Activated naive CD4-positive, alpha-beta T cell treated with anti-CD3 and anti-CD28 coated beads for 36 hours (primary cell): ENCODE measurements at regions of chr2 and their contacts with region 1.

Region 1: GRCh38 chr2:10408649-10409579 is 39.2 kb downstream of the ODC1 start:
- DNase-seq: peak; percentile 89
- H3K4me3 Mint-ChIP-seq: peak overlapping the region; percentile 59
- H3K27ac Mint-ChIP-seq: peak overlapping the region; percentile 97
- H3K4me1 Mint-ChIP-seq: peaks cover 46% of the 10 kb centered on the region
- H3K27me3 Mint-ChIP-seq: no peaks in the 10 kb centered on the region

Region 2: DNA sequence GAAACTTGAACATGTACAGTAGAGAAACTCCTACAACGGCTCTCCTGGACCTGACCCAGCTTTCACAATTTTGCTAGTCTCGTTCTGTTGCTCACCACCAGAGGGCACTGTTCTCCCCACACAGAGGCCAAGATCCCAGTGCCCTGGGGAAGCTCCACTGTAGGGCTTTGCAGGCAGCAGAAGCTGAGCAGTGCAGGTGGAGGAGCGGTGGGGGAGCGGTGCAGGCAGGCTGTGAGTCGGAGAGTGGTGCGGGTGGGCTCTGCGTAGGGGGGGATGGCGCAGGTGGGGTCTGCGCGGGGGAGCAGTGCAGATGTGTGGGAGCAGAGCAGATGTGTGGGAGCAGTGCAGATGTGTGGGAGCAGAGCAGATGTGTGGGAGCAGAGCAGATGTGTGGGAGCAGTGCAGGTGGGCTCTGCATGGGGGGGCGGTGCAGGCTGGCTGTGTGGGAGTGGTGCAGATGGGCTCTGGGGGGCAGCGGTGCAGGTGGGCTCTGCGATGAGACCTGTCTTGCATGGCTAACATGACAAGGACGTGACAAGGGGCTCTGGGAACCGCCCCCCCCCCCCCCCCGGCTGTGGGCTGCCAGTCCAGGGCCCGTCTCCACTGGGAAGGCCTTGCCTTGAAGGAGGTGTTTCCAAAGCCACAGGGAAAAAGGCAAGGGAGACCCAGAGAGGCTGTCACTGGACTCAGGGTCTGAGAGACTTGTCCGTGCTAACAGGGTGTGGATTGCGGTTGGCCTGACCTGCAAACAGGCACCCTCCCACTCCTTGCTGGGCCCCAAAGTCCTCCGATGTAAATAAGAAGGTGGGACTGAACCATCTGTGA is 336.0 kb before region 1 on chr2:
- CTCF ChIA-PET with region 1: interaction called, 26 read pairs
- intact Hi-C with region 1: loop called (anchors 1 kb)
- DNase-seq: peak; percentile 88
- H3K4me3 Mint-ChIP-seq: no peak overlapping the region
- H3K27ac Mint-ChIP-seq: no peak overlapping the region
- H3K4me1 Mint-ChIP-seq: peaks cover 1% of the 10 kb centered on the region
- H3K27me3 Mint-ChIP-seq: peaks cover 45% of the 10 kb centered on the region

Region 3: GRCh38 chr2:10232096-10232815 is 176.7 kb before region 1 on chr2:
- CTCF ChIA-PET with region 1: interaction called, 15 read pairs
- intact Hi-C with region 1: no loop called
- DNase-seq: no peak
- H3K4me3 Mint-ChIP-seq: no peak overlapping the region
- H3K27ac Mint-ChIP-seq: no peak overlapping the region
- H3K4me1 Mint-ChIP-seq: peaks cover 4% of the 10 kb centered on the region
- H3K27me3 Mint-ChIP-seq: no peaks in the 10 kb centered on the region

Region 4: GRCh38 chr2:10331027-10331701 is 77.8 kb before region 1 on chr2:
- CTCF ChIA-PET with region 1: interaction called, 74 read pairs
- intact Hi-C with region 1: loop called (anchors 1 kb)
- DNase-seq: peak; percentile 92
- H3K4me3 Mint-ChIP-seq: peak overlapping the region; percentile 86
- H3K27ac Mint-ChIP-seq: peak overlapping the region; percentile 91
- H3K4me1 Mint-ChIP-seq: peaks cover 77% of the 10 kb centered on the region
- H3K27me3 Mint-ChIP-seq: no peaks in the 10 kb centered on the region

Region 5: GRCh38 chr2:10382354-10383061 is 26.4 kb before region 1 on chr2:
- CTCF ChIA-PET with region 1: interaction called, 24 read pairs
- intact Hi-C with region 1: loop called (anchors 2 kb)
- DNase-seq: peak; percentile 61
- H3K4me3 Mint-ChIP-seq: peak overlapping the region; percentile 11
- H3K27ac Mint-ChIP-seq: no peak overlapping the region
- H3K4me1 Mint-ChIP-seq: peaks cover 93% of the 10 kb centered on the region
- H3K27me3 Mint-ChIP-seq: no peaks in the 10 kb centered on the region

Region 6: DNA sequence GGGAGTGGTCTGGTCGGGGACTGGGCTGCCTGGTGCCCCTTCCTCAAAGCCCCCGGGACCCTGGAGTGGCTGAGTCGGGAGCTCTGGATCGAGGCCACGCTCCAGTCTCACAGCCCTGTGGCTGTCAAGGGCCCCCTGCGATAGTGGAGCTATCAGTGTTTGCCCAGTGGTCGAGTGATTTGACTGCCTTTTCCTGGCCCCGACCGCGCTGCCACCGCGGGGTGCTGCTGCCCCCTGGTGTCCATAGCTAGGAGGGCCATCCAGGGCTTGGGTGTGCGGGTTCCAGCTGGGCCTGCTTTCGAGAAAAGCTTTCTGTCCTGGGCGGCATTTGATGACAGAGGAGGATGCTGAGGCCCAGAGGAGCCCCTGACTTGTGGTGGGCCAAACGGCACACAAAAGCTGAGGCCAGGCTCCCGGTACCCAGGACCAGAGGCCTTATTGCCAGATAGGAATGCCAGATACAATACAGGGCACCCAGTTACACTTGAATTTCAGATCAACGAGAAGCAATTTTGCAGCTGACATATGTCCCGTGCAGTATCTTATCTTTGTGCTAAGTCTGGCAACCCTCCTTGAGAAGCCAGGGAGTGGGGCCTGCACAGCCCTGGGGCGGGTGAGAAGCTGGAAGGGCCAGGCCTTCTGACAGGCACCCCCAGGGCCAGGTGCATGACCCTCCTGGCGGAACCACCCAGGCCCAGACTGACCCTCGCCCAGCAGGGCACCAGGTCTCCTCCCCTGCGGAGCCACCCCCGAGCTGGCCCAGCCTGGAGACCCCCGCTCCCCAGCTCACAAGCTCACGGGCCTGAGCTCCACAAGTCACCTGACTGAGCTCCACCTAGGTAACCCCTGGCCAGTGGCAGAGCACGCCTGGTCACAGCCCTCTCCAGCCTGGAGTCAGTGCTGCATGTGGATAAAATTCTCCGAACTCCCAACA is 26.2 kb after region 1 on chr2:
- CTCF ChIA-PET with region 1: interaction called, 37 read pairs
- intact Hi-C with region 1: no loop called
- DNase-seq: peak; percentile 69
- H3K4me3 Mint-ChIP-seq: no peak overlapping the region
- H3K27ac Mint-ChIP-seq: no peak overlapping the region
- H3K4me1 Mint-ChIP-seq: peaks cover 7% of the 10 kb centered on the region
- H3K27me3 Mint-ChIP-seq: peaks cover 9% of the 10 kb centered on the region